KBM-7 (cell line): ENCODE measurements at regions of chr17 and their contacts with region 1.

Region 1: DNA sequence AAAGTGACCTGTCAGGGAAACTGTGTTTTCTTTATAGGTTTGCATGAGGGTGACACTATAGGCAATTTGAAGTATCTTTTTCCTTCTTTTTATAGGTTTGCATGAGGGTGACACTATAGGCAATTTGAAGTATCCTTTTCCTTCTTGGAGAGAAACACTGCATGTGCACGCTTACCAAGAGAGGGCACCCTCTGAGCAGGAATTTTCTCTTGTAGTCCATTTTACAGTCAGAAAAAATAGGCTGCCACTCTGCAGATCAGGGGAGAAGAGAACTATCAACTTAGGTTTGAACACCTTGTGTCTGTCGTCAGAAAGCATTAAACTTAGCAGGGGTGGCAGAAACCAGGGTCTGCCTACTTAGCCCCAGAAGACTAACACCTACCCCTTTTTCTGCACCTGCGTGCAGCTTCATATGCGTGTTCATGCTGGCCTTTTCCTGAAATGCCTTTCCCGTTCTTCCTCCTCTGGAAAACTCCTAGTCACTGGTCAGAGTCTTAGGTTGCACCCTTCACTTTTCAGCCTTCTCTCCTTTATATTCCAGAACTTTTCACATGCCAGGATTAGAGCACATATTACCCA is 16.4 kb upstream of the SMIM36 start:
- DNase-seq: peak; percentile 36

Region 2: GRCh38 chr17:55245986-55246385 is 281.6 kb before region 1 on chr17:
- in situ Hi-C with region 1: no loop called
- DNase-seq: no peak

Region 3: GRCh38 chr17:55341432-55341831 is 186.2 kb before region 1 on chr17:
- in situ Hi-C with region 1: no loop called
- DNase-seq: no peak

Region 4: GRCh38 chr17:55664287-55664686 is 136.7 kb after region 1 on chr17:
- in situ Hi-C with region 1: no loop called
- DNase-seq: peak; percentile 55

Region 5: GRCh38 chr17:55750750-55751657 is 223.4 kb after region 1 on chr17 and contains the start of gene PCTP:
- in situ Hi-C with region 1: loop called (anchors 25 kb)
- DNase-seq: peak; percentile 93